ENCODE measurements at regions of chr15 and their contacts with region 1.

Region 1: DNA sequence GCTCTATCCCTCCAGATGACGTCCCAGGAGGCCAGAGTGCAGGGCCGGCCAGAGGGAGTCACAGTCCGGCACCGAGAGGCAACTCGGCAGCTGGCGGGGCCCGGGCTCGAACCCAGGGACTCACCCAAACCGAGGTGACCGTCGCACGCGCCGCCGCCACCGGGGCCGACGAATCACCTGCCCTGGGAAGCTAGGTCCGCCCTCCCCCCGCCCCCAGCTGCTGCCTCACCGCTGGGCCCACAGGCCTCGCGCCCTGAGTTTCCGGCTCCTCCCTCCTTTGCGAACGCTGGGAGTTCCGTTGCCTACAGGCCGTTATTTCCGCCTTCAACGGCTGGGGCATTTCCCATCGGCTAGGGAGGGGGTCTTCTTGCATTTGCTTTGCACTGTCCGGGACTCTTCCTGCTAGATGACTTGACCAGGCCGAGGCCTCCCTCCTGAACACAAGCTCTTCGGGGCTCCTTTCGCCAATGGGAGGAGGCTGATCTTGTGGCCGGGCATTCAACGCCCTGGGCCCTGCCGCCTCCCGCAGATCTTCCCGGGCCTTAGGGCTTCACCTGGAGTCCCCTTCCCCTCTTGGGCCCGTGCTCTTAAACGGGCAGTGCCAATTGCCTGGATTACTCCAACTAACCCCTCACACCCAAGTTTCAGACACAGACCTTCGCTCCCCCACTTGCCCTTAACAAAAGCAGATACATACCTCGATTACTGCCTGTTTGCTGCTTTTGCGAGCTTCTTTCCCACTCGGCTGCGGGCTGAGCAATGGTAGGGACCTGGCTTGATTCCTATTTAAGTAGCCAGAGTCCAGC is at the start of gene SNUPN:
- DNase-seq: peak; percentile 77 to 96
- H3K4me3 ChIP-seq: peak within 1 kb of the TSS; percentile 90 to 96
- H3K27ac ChIP-seq: peak within 1 kb of the TSS; percentile 93 to 97
- H3K4me1 ChIP-seq: peaks cover 0 to 10% of the 10 kb centered on the region in 2 donors
- H3K27me3 ChIP-seq: no peaks in the 10 kb centered on the region
- CTCF ChIP-seq: no peak
- total RNA-seq, gene SNUPN: 6.7 TPM

Region 2: DNA sequence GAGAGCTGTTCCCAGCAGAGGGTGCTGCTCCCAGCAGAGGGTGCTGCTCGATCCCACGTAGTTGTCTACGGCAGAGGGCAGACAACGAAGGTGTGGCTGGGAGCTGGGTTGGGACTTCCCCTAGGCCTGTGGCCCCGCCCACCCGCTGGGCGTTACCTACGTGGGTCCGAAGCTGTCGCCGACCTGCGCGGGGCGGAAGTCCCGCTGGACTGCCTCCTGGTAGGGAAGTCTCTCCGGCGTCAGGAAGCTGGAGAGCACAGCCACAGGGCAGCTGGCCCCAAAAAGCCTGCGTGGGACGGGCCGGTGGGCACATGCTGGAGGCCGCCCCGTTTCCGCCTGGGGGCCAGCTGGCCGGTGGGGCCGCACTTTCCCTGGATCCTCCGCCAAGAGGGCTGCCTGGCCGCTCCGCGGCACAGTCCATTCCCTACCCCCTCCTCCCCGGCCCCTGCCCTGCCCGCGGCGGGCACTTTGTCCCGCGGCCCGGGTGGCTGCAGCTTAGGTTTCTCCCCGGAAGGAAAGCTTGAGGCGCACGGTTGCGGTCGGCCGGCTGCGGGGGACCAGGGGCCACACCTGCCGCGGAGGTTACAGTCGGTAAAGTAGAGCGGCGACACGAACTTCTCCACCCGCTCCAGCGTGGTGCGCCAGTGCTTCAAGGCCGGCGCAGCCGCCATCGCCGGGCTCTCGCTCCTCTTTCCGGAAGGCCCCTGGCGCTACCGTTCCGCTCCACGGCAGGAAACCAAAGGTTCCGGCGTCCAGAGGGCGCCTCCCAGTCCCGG is 257.6 kb before region 1 on chr15 and contains the start of gene MAN2C1:
- intact Hi-C with region 1: loop called (anchors 5 kb)
- DNase-seq: peak; percentile 73 to 97
- H3K4me3 ChIP-seq: peak within 1 kb of the TSS; percentile 94 to 98
- H3K27ac ChIP-seq: peak within 1 kb of the TSS; percentile 99
- H3K4me1 ChIP-seq: peaks cover 5 to 8% of the 10 kb centered on the region in 2 donors
- H3K27me3 ChIP-seq: no peaks in the 10 kb centered on the region
- CTCF ChIP-seq: peak; percentile 69 to 82 (median 72)
- total RNA-seq, gene MAN2C1: 447 TPM

Region 3: DNA sequence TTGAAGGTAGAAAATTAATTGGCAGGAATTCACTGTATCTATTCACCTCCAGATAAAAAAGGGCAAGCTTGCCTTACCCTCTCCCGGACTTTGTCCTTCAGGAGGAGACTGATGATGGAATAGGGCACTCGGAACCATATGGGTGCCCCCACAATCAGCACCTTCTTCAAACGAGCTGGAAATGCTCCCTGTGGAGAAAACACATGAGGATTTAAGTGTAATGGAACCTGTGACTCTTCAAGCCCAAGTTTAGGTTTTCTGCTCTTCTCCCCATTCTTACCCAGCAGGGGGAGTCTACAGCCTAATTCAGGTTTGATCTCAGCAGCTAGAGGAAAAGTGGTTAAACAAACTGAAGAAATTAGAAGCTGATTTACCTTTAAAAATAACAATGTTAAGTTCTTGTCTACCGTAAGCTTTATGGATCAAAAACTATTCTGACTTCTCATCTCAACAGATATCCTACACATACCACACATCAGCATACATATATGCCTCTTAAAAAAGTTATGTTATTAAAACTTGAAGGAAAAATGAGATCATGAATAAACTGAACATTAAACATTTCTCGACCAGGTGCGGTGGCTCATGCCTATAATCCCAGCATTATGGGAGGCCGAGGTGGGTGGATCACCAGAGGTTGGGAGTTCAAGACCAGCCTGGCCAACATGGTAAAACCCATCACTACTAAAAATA is 116.8 kb before region 1 on chr15:
- intact Hi-C with region 1: loop called (anchors 5 kb)
- DNase-seq: no peak
- H3K4me3 ChIP-seq: no peak overlapping the region
- H3K27ac ChIP-seq: no peak overlapping the region
- H3K4me1 ChIP-seq: no peaks in the 10 kb centered on the region
- H3K27me3 ChIP-seq: no peaks in the 10 kb centered on the region
- CTCF ChIP-seq: peak in 2 of 3 experiments; percentile 28 to 46

Region 4: GRCh38 chr15:75578948-75579920 is 46.5 kb before region 1 on chr15 and contains the start of gene PTPN9:
- intact Hi-C with region 1: loop called (anchors 5 kb)
- DNase-seq: peak in 1 of 2 donors; percentile 86
- H3K4me3 ChIP-seq: peak within 1 kb of the TSS; percentile 94 to 97
- H3K27ac ChIP-seq: peak within 1 kb of the TSS; percentile 85 to 88
- H3K4me1 ChIP-seq: peaks cover 4 to 7% of the 10 kb centered on the region in 2 donors
- H3K27me3 ChIP-seq: no peaks in the 10 kb centered on the region
- CTCF ChIP-seq: peak in 2 of 3 experiments; percentile 54 to 77
- total RNA-seq, gene PTPN9: 7.1 TPM

Region 5: DNA sequence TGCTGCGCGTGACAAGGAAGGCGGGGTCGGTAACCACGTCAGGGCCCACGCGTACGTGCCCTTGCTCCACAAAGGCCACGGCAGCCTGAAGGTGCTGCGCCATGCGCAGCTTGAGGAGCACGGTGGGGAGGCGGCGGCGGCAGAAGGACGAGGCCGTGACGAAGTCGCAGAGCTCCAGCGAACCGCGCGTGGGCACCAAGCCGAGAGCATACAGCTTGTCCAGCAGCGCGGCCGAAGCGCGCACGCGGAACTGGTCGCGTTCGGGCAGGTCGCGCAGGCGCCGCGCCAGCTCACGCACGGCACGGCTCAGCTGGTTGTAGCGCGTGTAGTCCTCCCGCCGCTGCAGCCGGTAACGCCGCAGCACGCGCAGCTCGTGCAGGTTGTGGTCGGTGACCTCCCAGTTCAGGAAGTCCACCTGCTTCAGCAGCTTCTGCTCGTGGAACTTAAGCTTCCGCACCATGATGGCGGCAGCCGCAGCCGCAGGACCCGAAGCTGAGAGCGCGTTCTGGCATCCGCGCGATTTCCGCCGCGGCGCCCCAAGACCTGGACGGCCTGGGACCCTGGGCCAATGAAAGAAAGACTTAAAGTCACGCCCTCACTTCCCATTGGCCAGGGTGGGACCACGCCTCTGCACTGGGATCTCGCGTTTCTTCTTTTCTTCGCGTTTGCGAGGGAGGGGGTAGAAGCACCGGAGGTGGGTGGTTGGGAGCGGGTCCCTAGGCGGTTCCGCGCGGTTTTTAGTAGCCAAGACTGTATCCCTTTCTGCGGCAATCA is 14.2 kb after region 1 on chr15 and contains the start of gene IMP3:
- intact Hi-C with region 1: loop called (anchors 2 kb)
- DNase-seq: peak; percentile 84 to 97
- H3K4me3 ChIP-seq: peak within 1 kb of the TSS; percentile 82 to 94
- H3K27ac ChIP-seq: peak within 1 kb of the TSS; percentile 88 to 95
- H3K4me1 ChIP-seq: peaks cover 9 to 32% of the 10 kb centered on the region in 2 donors
- H3K27me3 ChIP-seq: no peaks in the 10 kb centered on the region
- CTCF ChIP-seq: no peak
- total RNA-seq, gene IMP3: 159 TPM

Region 6: DNA sequence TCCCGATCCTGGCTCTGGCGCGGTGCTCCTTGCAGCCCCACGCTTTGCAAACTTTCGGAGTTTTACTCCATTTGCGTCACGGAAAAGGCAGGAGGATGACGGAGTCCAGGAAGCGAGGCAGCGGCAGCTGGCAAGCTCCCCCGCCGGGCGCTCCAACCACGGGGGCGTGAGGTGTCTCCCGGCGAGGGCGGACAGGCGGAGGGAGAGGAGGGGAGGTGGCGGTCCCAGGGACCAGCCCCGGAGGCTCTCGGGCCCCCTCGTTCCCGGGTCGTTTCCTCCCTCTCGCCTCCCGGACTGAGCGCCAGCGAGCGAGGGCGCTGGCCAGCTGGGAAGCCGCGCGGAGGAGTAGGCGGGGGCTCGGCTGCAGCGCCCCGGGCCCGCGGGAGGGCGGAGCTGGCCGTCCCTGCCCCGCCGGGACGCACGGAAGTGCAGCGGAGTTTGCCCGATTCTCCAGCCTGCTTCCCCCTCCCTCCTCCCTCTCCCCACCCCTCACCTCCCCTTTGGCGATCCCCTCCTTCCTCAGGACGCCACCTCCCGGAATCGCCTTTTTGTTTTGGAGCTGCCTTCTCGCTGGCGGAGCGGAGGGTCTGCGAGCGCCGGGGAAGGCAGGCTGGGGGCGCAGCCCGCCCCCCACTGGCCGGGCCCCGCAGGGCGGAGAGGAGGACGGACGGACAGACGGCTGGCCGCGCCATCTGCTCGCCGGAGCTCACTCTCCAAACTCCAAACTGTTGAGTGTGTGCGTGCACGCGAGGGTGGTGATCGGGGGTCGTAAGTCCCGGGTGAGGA is 21.8 kb after region 1 on chr15 and contains the start of gene SNX33:
- intact Hi-C with region 1: loop called (anchors 1 kb)
- DNase-seq: peak in 1 of 2 donors; percentile 91
- H3K4me3 ChIP-seq: peak within 1 kb of the TSS; percentile 86 to 94
- H3K27ac ChIP-seq: peak within 1 kb of the TSS; percentile 98 to 99
- H3K4me1 ChIP-seq: peaks cover 24 to 43% of the 10 kb centered on the region in 2 donors
- H3K27me3 ChIP-seq: no peaks in the 10 kb centered on the region
- CTCF ChIP-seq: peak; percentile 35 to 59 (median 46)
- total RNA-seq, gene SNX33: 53.5 TPM

Measured in ascending aorta (tissue), 2 donors.